Psoas muscle (tissue), 8 donors: ENCODE measurements at regions of chr9 and their contacts with region 1.

Region 1: DNA sequence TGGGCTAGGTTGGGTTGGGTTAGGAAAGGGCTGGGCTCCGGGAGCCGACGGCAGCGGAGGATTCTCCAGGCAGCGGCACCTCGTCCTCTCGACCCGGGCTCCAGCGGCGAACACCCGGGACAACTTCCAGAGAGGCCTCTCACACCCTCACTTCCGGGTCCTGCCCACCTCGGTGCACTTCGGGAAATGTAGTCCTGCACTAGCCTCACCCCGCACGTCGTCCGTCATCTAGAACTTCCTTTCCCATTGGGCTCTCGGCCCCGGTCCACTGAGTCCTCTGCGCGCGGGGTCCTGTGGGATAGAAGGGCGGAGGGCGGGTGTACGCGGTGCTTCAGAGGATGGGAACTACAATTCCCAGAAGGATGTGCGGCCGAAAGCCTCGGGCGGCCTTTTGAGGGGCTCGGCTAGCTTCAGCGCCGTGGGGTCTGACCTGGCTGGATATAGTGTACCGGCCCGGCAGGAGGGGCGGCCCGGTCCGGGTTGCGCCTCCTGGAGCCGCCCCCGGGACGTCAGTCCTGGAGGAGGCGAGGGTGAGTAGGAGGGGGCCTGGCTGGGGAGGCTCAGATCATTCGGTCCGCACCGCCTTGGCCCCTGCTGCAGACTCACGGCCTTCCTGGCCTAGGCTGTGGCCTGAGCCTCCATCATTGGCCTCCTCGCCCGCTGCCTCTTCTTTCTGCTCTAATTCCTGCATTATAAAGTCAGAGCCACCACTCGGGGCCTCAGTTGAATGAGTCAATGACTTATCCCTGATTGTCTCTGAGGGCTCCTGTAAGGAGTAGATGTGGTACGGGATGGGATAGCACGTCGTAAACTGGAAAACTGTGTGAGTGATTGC is at the starts of genes ERP44 and INVS:
- DNase-seq: peak; percentile 99
- ATAC-seq: peak; percentile 95 to 98 (median 97)
- H3K4me3 ChIP-seq: peak within 1 kb of the TSS; percentile 99
- H3K27ac ChIP-seq: peak within 1 kb of the TSS; percentile 97
- H3K4me1 ChIP-seq: peaks cover 32% of the 10 kb centered on the region
- H3K27me3 ChIP-seq: no peaks in the 10 kb centered on the region
- CTCF ChIP-seq: no peak
- total RNA-seq, gene ERP44: 7.5 to 12.1 (median 9.9) TPM
- total RNA-seq, gene INVS: 4.1 to 7.3 (median 5.9) TPM

Region 2: DNA sequence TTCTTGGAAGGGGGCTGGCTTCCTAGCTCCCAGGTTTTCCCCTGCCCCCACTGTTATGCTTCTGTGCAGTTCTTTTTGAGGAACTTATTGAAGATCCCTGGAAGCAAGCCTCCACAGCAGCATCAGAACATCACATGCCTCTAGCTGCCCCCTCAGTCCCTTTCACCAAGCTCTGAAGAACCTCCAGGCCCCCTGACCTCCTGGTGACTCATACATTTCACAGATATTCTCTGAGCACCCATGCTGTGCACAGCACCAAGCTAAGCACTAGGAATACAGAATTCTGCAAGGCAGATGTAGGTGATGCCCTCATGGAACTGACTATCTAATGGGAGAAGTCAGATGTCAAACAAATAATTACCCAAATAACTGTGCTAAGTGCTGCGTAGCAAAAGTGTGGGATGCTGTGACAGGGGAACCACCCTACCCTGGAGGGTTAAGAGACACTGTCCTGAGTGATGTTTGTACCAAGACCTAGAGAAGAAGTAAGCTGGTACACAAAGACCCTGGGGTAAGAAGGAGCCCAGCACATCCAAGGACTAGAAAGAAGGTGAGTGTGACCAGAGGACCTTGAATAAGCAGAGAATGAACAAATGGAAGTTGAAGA is 491.2 kb before region 1 on chr9:
- intact Hi-C with region 1: no loop called
- DNase-seq: no peak
- ATAC-seq: no peak
- H3K4me3 ChIP-seq: no peak overlapping the region
- H3K27ac ChIP-seq: no peak overlapping the region
- H3K4me1 ChIP-seq: no peaks in the 10 kb centered on the region
- H3K27me3 ChIP-seq: no peaks in the 10 kb centered on the region
- CTCF ChIP-seq: no peak

Region 3: GRCh38 chr9:99762470-99762869 is 336.6 kb before region 1 on chr9:
- intact Hi-C with region 1: no loop called
- DNase-seq: no peak
- ATAC-seq: no peak
- H3K4me3 ChIP-seq: no peak overlapping the region
- H3K27ac ChIP-seq: no peak overlapping the region
- H3K4me1 ChIP-seq: no peaks in the 10 kb centered on the region
- H3K27me3 ChIP-seq: peaks cover 0 to 2% (median 0%) of the 10 kb centered on the region in 3 donors
- CTCF ChIP-seq: no peak

Region 4: GRCh38 chr9:100322954-100323536 is 223.9 kb after region 1 on chr9:
- intact Hi-C with region 1: no loop called
- DNase-seq: no peak
- ATAC-seq: peak in 2 of 4 donors; percentile 46 to 69
- H3K4me3 ChIP-seq: no peak overlapping the region
- H3K27ac ChIP-seq: no peak overlapping the region
- H3K4me1 ChIP-seq: no peaks in the 10 kb centered on the region
- H3K27me3 ChIP-seq: no peaks in the 10 kb centered on the region
- CTCF ChIP-seq: peak; percentile 59

Region 5: GRCh38 chr9:101398068-101398929 is 1299.2 kb after region 1 on chr9 and contains the starts of genes MRPL50 and ZNF189:
- intact Hi-C with region 1: loop called in 1 of 2 experiments (anchors 10 kb)
- DNase-seq: peak; percentile 97 to 98
- ATAC-seq: peak; percentile 96 to 99 (median 98)
- H3K4me3 ChIP-seq: peak within 1 kb of the TSS; percentile 81
- H3K27ac ChIP-seq: peak within 1 kb of the TSS; percentile 88
- H3K4me1 ChIP-seq: peaks cover 39% of the 10 kb centered on the region
- H3K27me3 ChIP-seq: no peaks in the 10 kb centered on the region
- CTCF ChIP-seq: no peak
- total RNA-seq, gene MRPL50: 11.0 to 15.2 (median 12.0) TPM
- total RNA-seq, gene ZNF189: 7.8 to 31.3 (median 12.2) TPM